ENCODE measurements at regions of chr13 and their contacts with region 1.

Region 1: DNA sequence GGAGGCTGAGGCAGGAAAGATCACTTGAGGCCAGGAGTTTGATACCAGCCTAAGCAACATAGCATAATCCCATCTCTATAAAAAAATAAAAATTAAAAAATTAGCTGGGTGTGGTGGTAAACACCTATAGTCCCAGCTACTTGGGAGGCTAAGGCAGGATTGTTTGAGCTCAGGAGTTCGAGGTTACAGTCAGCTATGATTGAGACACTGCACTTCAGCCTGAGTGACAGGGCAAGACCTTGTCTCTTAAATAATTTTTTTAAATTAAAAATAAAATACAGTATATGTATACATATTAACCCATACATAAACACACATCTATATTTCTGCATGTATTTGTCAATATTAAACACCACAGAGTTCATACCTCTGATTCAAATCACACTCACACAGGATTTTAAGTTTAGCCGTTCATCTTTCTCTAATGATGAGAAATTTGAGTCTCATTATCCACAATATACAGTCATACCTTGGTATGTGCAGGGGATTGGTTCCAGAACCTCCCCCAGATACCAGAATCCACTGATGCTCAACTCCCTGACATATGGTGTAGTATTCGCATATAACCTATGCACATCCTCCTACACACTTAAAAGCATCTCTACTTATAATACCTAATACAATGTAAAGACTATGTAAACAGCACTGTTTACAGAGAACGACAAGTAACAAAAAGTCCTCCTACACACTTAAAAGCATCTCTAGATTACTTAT is 44.7 kb downstream of the PSPC1 start:
- DNase-seq: no peak
- ATAC-seq: no peak
- H3K4me3 ChIP-seq: no peak overlapping the region
- H3K4me3 Mint-ChIP-seq: no peak overlapping the region
- H3K27ac ChIP-seq: no peak overlapping the region
- H3K27ac Mint-ChIP-seq: no peak overlapping the region
- H3K4me1 ChIP-seq: no peaks in the 10 kb centered on the region
- H3K4me1 Mint-ChIP-seq: peaks cover 1% of the 10 kb centered on the region
- H3K27me3 ChIP-seq: no peaks in the 10 kb centered on the region
- H3K27me3 Mint-ChIP-seq: no peaks in the 10 kb centered on the region
- CTCF ChIP-seq: no peak

Region 2: GRCh38 chr13:19726611-19727010 is 11.4 kb before region 1 on chr13:
- CTCF ChIA-PET with region 1: no interaction called
- POLR2A ChIA-PET with region 1: no interaction called
- intact Hi-C with region 1: loop called (anchors 1 kb)
- DNase-seq: no peak
- ATAC-seq: no peak
- H3K4me3 ChIP-seq: no peak overlapping the region
- H3K4me3 Mint-ChIP-seq: no peak overlapping the region
- H3K27ac ChIP-seq: no peak overlapping the region
- H3K27ac Mint-ChIP-seq: no peak overlapping the region
- H3K4me1 ChIP-seq: no peaks in the 10 kb centered on the region
- H3K4me1 Mint-ChIP-seq: no peaks in the 10 kb centered on the region
- H3K27me3 ChIP-seq: no peaks in the 10 kb centered on the region
- H3K27me3 Mint-ChIP-seq: no peaks in the 10 kb centered on the region
- CTCF ChIP-seq: no peak